AG04449 (cell line): ENCODE measurements at regions of chr12 and their contacts with region 1.

Region 1: GRCh38 chr12:121494093-121494787 is 86.6 kb downstream of the KDM2B start:
- DNase-seq: no peak
- H3K4me3 ChIP-seq: no peak overlapping the region
- CTCF ChIP-seq: peak; percentile 82

Region 2: DNA sequence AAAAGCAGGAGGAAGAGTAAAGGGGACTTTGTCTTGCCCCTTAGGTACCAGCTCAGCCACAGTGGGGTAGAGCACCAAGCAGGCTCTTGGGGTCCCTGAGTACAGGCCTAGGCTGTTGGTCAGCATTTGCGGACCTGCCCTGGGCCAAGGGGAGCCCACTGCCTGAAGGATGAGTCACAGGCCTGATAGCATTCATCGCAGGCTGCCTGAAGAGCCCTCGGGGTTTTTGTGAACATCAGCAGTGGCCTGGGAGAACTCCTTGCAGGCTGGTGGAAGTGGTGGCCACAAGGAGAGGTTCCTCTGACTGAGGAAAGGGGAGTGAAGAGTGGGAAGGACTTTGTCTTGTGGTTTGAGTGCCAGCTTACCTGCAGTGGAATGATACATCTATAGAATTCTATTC is 386.5 kb before region 1 on chr12:
- CTCF ChIA-PET with region 1: no interaction called
- POLR2A ChIA-PET with region 1: no interaction called
- DNase-seq: no peak
- H3K4me3 ChIP-seq: no peak overlapping the region
- CTCF ChIP-seq: no peak

Region 3: GRCh38 chr12:121423682-121424623 is 70.3 kb before region 1 on chr12:
- CTCF ChIA-PET with region 1: no interaction called
- POLR2A ChIA-PET with region 1: no interaction called
- DNase-seq: no peak
- H3K4me3 ChIP-seq: no peak overlapping the region
- CTCF ChIP-seq: no peak

Region 4: DNA sequence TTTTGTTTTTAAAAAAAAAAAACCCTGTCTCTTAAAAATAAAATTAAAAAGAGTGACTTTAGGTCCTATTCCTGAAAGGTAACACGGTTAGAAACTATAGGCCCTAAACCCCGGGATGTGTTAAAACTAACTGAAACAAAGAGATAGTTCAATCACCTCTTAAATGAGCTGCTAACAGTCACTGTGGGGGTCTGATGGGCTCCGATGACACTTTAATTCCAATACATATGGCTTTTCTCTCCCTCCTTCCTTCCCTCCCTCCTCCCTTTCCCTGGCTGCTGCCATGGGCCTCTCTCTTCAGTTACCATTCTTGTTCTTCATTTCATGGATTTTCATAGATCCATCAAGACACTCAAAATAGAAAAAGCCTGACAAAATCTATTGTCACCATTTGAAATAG is 17.8 kb before region 1 on chr12:
- CTCF ChIA-PET with region 1: interaction called, 89 read pairs
- POLR2A ChIA-PET with region 1: no interaction called
- DNase-seq: no peak
- H3K4me3 ChIP-seq: no peak overlapping the region
- CTCF ChIP-seq: no peak